Left cardiac atrium (tissue), 4 donors: ENCODE measurements at regions of chr14 and their contacts with region 1.

Region 1: DNA sequence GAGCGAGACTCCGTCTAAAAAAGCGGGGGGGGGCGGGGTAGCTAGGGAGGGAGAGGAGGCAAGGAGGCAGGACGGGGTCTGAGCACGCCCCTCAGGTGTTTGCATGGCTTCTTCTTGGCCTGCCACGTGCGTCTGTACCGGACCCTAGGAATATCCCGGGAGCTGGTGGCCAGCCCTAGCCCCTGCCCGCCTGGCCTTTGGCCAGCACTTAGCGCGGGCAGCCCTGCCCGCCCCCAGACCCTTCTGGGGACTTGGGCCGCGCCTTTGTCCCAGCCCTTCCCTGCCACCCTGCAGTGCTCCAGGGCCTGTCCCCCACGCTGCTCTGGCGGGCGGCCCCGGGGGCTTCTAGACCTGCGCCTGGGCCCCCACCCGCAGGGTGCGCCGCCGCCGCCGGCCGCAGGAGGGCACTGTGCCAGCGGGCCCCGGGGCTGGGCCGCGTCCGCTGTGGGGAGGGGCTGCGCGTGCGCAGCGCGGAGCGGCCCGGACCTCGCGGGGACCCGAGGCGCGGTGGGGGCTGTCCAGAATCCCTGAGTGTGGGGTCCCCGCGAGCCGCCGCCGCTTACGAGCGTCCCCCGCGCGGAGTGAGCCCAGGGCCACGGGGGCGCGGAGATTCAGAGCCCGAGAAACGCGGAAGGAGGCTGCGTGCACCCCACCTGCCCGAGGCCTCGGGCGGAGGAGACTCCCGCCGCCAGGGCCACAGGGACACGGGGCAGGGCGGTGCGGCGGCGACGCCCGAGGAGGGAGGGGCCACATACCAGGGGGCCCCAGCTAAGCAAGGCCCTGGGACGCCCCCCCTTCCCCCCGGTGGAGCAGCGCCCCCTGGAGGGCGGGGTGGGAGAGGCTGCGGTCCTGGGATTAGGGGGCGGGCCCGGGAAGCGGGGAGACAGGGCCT is 21.0 kb downstream of the SLC25A29 start:
- DNase-seq: peak; percentile 76
- ATAC-seq: peak; percentile 92 to 93

Region 2: DNA sequence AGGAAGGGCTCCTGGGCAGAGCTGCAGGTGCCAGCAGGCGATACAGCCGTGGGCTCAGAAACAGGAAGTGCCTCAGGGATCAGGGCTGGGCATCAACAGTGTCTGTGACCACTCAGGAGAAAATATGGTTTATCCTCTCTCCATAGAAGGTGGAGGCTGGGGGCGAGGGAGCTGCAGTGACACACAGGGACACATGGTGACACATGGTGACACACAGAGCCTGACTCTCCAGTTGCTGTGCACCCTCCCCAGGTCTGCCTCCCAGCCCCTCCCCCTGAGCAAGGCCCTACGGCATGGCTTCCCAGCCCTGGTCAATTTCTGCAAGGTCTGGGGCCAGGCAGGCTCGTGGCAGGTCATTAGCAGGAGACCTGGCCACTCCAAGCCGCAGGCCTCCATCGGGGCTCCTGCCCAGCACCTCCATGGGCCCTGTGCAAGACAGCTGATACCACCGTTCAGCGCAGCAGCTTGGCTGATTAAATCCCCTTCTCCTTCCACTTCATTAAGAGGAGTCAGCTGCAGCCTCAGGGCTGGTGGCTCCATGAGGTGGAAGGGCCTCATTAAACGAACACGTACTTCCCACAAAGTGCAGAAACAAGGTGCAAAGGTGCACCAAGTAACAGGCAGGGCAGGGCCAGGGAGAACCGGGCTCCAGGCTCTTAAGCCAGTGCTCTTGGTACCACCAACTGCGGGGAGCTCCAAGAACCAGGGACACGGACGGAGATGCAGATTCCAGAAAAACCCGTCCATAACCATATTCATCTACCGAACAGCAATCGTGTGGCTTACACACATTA is 743.4 kb before region 1 on chr14:
- intact Hi-C with region 1: no loop called
- DNase-seq: no peak
- ATAC-seq: no peak

Region 3: GRCh38 chr14:100140452-100141078 is 144.7 kb before region 1 on chr14:
- intact Hi-C with region 1: no loop called
- DNase-seq: peak; percentile 60
- ATAC-seq: peak in 1 of 2 donors; percentile 16

Region 4: DNA sequence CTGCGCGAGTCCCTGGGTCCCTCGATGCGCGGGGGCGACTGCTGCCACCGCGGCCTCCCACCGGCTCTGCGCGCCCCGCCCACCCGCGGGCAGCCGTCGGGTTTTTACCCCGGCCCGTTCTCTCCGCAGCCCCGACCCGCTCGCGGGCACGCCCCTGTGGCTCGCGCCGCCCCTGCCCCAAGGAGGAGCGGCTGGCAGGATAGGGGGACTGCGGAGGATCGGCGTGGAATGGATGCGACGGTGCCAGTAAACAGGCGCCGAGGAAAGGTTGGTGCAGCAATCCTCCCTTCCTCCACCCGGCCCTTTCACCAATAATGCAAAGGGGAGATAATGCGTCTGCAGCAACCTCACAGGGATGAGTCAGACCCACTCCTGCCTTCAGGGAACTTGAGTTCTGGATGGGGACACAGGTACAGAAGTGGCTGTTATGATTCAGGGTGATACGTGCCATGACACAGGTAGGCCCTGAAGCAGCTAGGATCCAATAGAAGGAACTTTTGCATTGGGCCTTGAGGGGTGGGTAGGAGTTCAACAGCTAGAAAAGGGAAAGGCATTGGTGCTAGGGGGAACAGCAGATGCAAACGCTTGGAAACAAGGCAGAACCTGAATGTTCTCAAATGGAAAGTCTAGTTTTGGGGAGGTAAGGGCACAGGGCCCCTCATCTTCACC is 125.3 kb before region 1 on chr14:
- intact Hi-C with region 1: no loop called
- DNase-seq: no peak
- ATAC-seq: no peak

Region 5: DNA sequence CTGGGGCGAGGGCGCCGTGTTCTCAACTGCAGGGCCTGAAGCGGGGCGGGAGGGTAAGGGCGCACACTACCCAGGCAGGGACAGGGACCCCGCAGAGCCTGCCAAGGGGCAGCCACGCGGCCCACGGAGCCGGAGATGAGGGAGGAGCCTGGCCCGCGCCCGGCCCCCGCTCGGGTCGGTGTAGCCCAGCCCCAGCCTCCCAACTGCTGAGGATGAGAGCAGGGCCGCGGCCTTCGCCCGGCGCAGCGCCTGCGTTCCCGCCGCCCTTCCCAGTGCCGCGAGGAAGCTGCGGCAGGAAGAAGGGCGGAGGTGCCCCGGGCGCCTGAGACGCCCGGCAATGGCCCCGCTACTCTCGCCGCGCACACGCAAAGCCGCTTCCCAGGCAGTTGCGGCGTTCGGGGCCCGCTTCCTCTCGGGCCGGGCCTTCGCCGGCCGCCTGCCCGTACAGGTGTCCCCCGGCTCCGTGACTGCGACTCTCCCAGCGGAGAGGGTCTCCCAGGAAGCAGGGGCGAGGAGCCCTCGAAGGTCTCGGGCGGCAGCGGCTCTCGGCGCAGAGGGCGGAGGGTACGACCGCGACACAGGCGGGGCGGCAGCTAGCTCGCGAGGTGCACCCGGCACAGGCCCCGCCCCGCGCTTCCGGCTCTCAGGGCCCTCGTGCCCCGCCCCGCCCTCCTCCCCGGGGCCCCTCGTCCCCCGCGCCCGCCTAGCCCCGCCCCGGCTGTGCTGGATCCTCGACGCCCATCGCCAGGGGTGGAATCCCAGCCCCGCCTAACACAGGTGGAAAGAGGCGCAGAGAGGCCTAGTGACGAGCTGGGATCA is 71.1 kb before region 1 on chr14:
- intact Hi-C with region 1: no loop called
- DNase-seq: peak; percentile 95
- ATAC-seq: peak; percentile 98

Region 6: DNA sequence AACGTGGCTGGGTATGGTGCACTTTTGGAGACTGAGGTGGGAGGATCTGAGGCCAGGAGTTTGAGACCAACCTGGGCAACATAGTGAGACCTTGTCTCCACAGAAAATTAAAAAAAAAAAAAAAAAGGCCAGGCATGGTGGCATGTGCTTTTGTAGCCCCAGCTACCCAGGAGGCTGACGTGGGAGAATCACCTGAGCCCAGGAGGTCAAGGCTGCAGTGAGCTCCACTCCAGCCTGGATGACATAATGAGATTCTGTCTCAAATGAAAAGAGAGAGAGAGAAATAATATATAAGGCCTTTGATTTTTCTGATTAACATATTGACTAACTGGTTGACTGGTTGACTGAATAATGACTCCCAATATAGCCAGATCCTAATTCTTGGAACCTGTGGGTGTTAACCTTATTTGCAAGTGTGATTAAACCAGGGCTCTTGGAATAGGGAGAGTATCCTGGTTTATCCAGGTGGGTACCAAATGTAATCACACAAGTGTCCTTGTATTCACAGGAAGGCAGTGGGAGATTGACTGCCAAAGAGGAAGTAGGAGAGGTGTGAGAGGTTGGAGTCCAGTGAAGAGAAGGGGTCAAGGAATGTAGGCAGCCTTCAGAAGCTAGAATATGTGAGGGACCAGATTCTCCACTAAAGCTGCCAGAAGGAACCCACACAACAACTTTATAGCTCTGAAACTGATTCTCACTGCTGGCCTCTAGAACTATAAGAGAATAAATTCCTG is 34.4 kb before region 1 on chr14:
- intact Hi-C with region 1: loop called in 1 of 2 experiments (anchors 5 kb)
- DNase-seq: no peak
- ATAC-seq: no peak